ENCODE measurements at regions of chr1 and their contacts with region 1.

Region 1: DNA sequence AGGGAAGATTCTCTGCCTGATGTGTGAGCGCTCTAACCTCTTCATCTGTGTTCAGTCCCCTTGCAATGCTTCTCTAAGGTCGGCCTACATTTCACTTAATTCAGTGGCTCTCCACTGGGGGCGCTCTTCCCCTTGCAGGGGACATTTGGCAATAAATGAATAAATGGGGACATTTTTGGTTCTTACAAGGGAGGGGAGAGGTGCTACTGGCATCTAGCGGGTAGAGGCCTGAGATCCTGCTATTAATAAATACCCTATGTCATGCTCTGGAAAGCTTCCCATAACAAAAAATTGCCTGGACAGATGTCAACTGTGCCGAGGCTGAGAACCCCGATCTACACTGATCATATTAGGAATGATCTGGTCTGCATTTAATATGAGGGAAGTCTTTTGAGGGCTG is 25.9 kb upstream of the DNAJC11 start:
- DNase-seq: peak; percentile 16
- ATAC-seq: peak; percentile 87
- H3K4me3 ChIP-seq: no peak overlapping the region
- H3K27ac ChIP-seq: no peak overlapping the region
- H3K4me1 ChIP-seq: no peaks in the 10 kb centered on the region
- H3K27me3 ChIP-seq: no peaks in the 10 kb centered on the region
- CTCF ChIP-seq: peak; percentile 82 to 95 (median 86)
- EP300 ChIP-seq: no peak
- POLR2A ChIP-seq: no peak
- RAD21 ChIP-seq: peak; percentile 83

Region 2: GRCh38 chr1:6704746-6705145 is 22.8 kb before region 1 on chr1:
- CTCF ChIA-PET with region 1: no interaction called
- POLR2A ChIA-PET with region 1: no interaction called
- RAD21 ChIA-PET with region 1: no interaction called
- SMC1A ChIA-PET with region 1: no interaction called
- in situ Hi-C with region 1: no loop called
- intact Hi-C with region 1: no loop called
- DNase-seq: no peak
- ATAC-seq: no peak
- H3K4me3 ChIP-seq: no peak overlapping the region
- H3K27ac ChIP-seq: no peak overlapping the region
- H3K4me1 ChIP-seq: peaks cover 7% of the 10 kb centered on the region
- H3K27me3 ChIP-seq: no peaks in the 10 kb centered on the region
- CTCF ChIP-seq: no peak
- EP300 ChIP-seq: no peak
- POLR2A ChIP-seq: no peak
- RAD21 ChIP-seq: no peak

Region 3: DNA sequence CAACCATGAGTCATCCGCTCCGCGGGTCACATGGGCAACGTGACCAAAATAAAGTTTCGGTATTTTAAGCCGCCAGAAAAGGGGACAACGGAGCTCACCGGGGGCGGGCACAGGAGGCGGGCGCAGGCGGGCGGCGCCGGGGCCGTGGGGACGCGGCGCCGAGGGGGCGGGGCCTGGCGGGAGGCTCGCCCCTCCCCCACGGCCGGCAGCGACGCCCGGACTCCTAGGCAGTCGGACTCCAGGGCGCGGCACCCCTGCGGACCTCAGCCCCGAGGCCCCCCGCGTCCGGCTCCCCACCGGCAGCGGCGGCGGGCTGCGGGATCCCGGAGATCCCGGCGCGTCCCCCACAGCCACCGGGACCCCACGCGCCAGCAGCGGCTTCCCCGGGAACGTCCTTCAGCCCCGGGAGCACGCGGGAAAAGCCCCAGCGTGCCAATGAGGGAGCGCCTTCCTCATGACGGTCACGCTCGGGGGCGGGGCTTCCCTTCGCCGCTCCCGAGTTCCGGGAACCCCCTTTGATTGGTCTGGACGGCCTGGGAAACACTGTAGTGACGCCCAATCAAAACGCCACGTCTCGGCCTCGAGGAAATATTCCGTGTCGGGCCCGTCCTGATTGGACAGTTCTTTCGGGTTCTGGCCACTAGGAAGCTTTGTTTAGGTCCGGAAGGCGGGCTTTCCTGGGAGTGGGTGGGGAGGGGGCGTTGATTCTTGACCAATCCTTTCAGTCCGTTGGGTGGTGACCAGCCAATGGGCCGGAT is 57.2 kb after region 1 on chr1:
- CTCF ChIA-PET with region 1: interaction called, 3 read pairs
- POLR2A ChIA-PET with region 1: no interaction called
- RAD21 ChIA-PET with region 1: no interaction called
- SMC1A ChIA-PET with region 1: no interaction called
- in situ Hi-C with region 1: no loop called
- intact Hi-C with region 1: loop called (anchors 5 kb)
- DNase-seq: peak; percentile 99
- ATAC-seq: peak; percentile 92
- H3K4me3 ChIP-seq: peak overlapping the region; percentile 88
- H3K27ac ChIP-seq: peak overlapping the region; percentile 90
- H3K4me1 ChIP-seq: peaks cover 3% of the 10 kb centered on the region
- H3K27me3 ChIP-seq: no peaks in the 10 kb centered on the region
- CTCF ChIP-seq: no peak
- EP300 ChIP-seq: peak in 1 of 2 experiments; percentile 44; a peak in 3 of 4 replicates
- POLR2A ChIP-seq: peak; percentile 85
- RAD21 ChIP-seq: no peak

Region 4: DNA sequence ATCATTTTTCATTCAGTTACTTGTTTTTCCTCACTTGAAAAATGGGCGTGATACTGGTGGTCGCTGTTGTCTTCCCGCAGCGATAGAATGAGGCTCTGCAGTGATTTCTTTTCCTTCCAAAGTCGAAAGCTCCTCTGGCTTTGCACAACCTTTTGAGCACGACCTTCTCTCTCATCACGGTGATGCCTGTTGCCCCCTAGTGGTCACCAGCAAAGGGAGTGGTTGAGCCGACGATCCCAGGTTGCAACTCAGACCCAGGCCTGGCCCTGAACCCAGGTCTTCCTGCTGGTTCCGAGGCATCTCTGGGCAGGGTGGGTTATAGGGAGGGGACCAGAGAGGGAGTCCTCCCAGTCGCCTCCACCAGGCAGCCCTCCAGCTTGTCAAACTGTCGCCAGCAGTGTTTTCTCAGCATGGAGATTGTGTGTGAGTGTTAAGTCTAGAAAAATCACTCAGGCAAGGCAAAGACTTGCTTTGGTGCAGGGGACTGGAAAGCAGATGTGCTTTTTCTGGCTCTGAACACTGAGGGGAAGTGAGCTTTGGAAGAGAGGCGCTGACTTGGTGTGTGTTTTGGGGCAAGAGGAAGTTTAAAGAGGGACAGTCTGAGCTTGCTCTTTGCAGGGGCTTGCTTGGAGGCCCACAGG is 343.0 kb after region 1 on chr1:
- CTCF ChIA-PET with region 1: interaction called, 5 read pairs
- POLR2A ChIA-PET with region 1: no interaction called
- RAD21 ChIA-PET with region 1: no interaction called
- SMC1A ChIA-PET with region 1: interaction called, 4 read pairs
- in situ Hi-C with region 1: loop called (anchors 5 kb)
- intact Hi-C with region 1: no loop called
- DNase-seq: peak; percentile 3
- ATAC-seq: peak; percentile 92
- H3K4me3 ChIP-seq: no peak overlapping the region
- H3K27ac ChIP-seq: no peak overlapping the region
- H3K4me1 ChIP-seq: no peaks in the 10 kb centered on the region
- H3K27me3 ChIP-seq: peaks cover 0 to 3% of the 10 kb centered on the region in 2 experiments; a peak in 1 of 4 replicates
- CTCF ChIP-seq: peak; percentile 83 to 93 (median 88)
- EP300 ChIP-seq: no peak
- POLR2A ChIP-seq: no peak
- RAD21 ChIP-seq: peak; percentile 83

Region 5: DNA sequence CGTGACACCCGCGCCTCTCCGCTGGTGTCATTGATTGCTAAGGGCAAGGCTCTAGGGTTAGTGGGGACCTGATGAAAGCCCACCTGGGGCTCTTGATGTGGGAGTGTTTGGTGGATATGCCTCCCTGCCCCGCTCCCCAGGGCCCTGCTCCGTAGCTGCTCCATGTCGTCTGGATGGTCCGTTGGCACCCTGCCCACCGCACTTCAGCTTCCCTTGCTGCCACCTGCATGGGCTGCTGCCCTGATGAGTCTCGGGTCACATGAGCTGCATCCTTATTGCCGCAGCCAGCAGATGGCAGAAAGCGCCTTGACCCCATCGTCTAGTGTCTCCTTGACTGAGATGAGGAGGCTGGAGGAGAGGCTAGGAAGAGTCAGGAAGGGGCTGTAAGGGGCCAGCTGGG is 497.1 kb after region 1 on chr1:
- CTCF ChIA-PET with region 1: no interaction called
- POLR2A ChIA-PET with region 1: no interaction called
- RAD21 ChIA-PET with region 1: no interaction called
- SMC1A ChIA-PET with region 1: no interaction called
- in situ Hi-C with region 1: loop called (anchors 5 kb)
- intact Hi-C with region 1: no loop called
- DNase-seq: no peak
- ATAC-seq: no peak
- H3K4me3 ChIP-seq: no peak overlapping the region
- H3K27ac ChIP-seq: no peak overlapping the region
- H3K4me1 ChIP-seq: no peaks in the 10 kb centered on the region
- H3K27me3 ChIP-seq: no peaks in the 10 kb centered on the region; a peak in 1 of 4 replicates
- CTCF ChIP-seq: no peak
- EP300 ChIP-seq: no peak
- POLR2A ChIP-seq: no peak
- RAD21 ChIP-seq: no peak

Region 6: DNA sequence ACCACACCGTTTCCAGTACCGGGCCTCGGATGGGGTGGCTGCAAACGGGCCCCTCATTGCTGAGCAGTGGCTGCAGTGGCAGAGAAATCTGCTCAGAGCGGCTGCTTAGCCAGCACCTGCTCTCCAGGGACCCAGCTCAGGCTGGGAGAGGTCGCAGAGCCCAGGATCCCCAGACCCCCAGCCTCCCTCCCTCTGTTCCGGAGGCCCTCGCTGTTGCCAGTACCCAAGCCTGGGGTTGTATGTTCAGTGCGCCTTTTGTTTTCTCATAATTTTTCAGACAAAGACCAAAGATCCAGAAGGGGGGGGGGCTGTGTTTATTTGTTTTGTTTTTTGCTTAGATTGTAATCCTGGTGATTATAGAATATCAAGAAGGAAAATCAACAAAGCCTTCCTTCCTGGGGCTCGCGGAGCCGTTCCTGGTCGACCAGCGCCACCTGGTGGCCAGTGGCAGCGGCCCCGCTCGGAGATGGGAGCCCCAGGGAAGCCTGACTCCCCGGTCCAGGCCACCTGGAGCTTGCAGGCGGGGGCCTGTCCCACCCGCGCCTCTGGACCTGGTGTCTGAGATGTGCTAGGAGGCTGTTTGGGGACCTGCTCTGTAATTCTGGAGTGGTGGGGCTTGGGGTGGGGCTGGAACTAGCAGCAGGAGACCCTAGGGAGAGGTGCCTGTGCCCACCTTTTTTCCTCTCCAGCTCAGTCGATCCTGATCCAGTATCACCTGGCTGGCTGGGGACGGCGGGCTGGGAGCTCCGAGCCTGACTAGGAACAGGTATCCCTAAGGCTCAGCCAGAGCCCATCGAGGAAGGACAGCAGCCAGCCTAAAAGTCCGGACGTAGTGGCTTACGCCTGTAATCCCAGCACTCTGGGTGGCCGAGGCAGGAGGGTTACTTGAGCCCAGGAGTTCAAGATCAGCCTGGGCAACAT is 919.7 kb after region 1 on chr1:
- CTCF ChIA-PET with region 1: no interaction called
- POLR2A ChIA-PET with region 1: no interaction called
- RAD21 ChIA-PET with region 1: no interaction called
- SMC1A ChIA-PET with region 1: no interaction called
- in situ Hi-C with region 1: loop called (anchors 5 kb)
- intact Hi-C with region 1: loop called (anchors 5 kb)
- DNase-seq: no peak
- ATAC-seq: peak; percentile 89
- H3K4me3 ChIP-seq: no peak overlapping the region
- H3K27ac ChIP-seq: no peak overlapping the region
- H3K4me1 ChIP-seq: peaks cover 3% of the 10 kb centered on the region; the same call in 1 of the 2 replicates
- H3K27me3 ChIP-seq: no peaks in the 10 kb centered on the region; a peak in 1 of 4 replicates
- CTCF ChIP-seq: peak; percentile 82 to 89 (median 87)
- EP300 ChIP-seq: no peak
- POLR2A ChIP-seq: no peak
- RAD21 ChIP-seq: peak; percentile 79

Measured in GM12878 (cell line).